Activated CD4-positive, alpha-beta memory T cell treated with anti-CD3 and anti-CD28 coated beads for 36 hours (primary cell): ENCODE measurements at regions of chr19 and their contacts with region 1.

Region 1: GRCh38 chr19:15418588-15419412 is at the start of gene AKAP8L:
- DNase-seq: peak; percentile 99
- H3K4me3 Mint-ChIP-seq: peak within 1 kb of the TSS; percentile 100
- H3K27ac Mint-ChIP-seq: peak within 1 kb of the TSS; percentile 97
- H3K4me1 Mint-ChIP-seq: peaks cover 39% of the 10 kb centered on the region
- H3K27me3 Mint-ChIP-seq: no peaks in the 10 kb centered on the region
- total RNA-seq, gene AKAP8L: 94.2 to 100 TPM

Region 2: DNA sequence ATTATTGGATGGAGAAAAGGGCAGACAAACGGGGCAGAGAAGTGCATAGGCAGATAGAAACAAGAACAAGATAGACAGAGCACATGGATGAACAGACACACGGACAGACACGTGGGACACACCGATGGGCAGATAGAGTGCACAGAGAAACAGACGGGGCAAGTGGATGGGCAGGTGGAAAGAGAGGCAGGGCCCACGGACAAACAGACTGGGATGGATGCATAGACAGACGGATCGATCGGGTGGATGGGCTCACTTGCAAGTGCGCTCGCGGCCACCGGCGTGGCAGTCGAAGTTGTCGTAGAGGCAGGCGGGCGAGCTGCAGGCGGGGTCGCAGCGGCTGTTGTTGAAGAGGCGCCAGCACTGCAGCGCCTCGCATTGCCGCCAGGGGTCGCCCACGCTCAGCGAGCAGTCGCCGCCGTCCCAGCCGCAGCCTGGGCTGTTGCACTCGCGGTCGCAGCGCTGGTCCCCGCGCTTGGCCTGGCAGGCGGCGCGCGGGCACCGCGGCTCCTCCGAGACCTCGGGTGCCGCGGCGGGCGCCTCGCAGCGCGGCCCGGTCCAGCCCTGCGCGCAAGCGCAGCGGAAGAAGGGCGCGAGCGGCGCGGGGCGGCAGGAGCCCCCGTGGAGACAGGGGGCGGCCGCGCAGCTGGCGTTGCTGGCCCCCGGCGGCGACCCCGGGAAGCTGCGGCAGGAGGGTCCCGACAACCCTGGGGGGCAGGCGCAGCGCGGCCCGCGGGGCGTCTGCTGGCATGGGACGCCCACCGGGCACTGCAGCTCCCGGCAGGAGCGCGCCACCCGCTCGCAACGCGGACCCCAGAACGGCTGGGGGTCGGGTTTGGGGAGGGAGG is 241.3 kb before region 1 on chr19:
- CTCF ChIA-PET with region 1: interaction called, 12 read pairs
- POLR2A ChIA-PET with region 1: no interaction called
- intact Hi-C with region 1: loop called (anchors 1 kb)
- DNase-seq: peak; percentile 87
- H3K4me3 Mint-ChIP-seq: no peak overlapping the region
- H3K27ac Mint-ChIP-seq: no peak overlapping the region
- H3K4me1 Mint-ChIP-seq: peaks cover 4% of the 10 kb centered on the region
- H3K27me3 Mint-ChIP-seq: peaks cover 4% of the 10 kb centered on the region

Region 3: DNA sequence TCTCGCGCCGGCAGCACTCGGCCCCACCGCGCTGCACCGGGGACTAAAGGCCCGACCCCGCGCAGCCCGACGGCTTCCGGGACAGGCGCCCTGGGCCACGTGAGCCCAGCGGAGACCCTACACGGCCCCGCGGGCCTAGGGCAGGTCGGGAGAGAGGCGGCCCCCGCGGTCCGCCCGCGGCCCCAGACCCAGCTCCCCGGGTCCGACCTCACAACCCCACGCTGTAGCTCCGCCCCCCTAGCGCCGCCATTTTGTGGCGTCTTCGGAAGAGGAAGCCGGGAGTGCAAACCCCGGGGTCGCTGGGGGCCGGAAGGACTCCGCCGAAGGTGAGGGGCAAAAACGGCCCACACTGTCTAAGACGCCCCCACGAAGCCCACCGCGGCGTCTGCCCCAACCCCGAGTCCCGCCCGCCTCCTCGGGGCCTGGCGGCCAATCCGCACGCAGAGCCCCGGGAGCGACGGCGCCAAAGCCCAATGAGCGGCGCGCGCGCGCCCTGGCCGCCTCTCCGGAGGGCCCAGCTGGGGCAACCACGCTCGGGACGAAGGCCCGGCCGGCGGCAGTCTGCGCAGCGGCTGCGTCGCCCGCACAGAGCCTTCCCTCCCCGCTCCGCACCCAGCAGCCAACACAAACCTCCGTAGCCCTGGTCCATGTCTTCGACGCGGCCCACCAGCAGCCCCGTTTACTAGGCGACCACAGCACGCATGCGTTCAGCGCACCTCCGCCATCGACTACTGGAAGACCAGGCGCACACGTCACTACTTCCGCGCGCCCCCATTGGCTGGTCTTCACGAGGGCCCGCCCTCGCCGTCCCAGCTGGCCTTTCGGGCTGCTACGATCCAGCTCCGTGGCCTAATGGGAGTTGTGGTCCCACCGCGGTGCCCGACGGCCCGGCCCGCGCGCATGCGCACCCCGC is 39.5 kb before region 1 on chr19 and contains the start of gene AKAP8:
- CTCF ChIA-PET with region 1: interaction called, 57 read pairs
- POLR2A ChIA-PET with region 1: interaction called, 51 read pairs
- intact Hi-C with region 1: loop called (anchors 1 kb)
- DNase-seq: peak; percentile 99
- H3K4me3 Mint-ChIP-seq: peak within 1 kb of the TSS; percentile 95
- H3K27ac Mint-ChIP-seq: peak within 1 kb of the TSS; percentile 96
- H3K4me1 Mint-ChIP-seq: peaks cover 42% of the 10 kb centered on the region
- H3K27me3 Mint-ChIP-seq: peaks cover 2% of the 10 kb centered on the region
- total RNA-seq, gene AKAP8: 31.5 to 37.2 TPM

Region 4: GRCh38 chr19:15393963-15394362 is 24.8 kb before region 1 on chr19:
- CTCF ChIA-PET with region 1: no interaction called
- POLR2A ChIA-PET with region 1: no interaction called
- intact Hi-C with region 1: no loop called
- DNase-seq: no peak
- H3K4me3 Mint-ChIP-seq: no peak overlapping the region
- H3K27ac Mint-ChIP-seq: no peak overlapping the region
- H3K4me1 Mint-ChIP-seq: peaks cover 3% of the 10 kb centered on the region
- H3K27me3 Mint-ChIP-seq: no peaks in the 10 kb centered on the region

Region 5: GRCh38 chr19:15432629-15433518 is 14.1 kb after region 1 on chr19:
- CTCF ChIA-PET with region 1: interaction called, 24 read pairs
- POLR2A ChIA-PET with region 1: interaction called, 32 read pairs
- intact Hi-C with region 1: loop called (anchors 1 kb)
- DNase-seq: peak; percentile 95
- H3K4me3 Mint-ChIP-seq: peak overlapping the region; percentile 85
- H3K27ac Mint-ChIP-seq: peak overlapping the region; percentile 85
- H3K4me1 Mint-ChIP-seq: peaks cover 31% of the 10 kb centered on the region
- H3K27me3 Mint-ChIP-seq: no peaks in the 10 kb centered on the region

Region 6: DNA sequence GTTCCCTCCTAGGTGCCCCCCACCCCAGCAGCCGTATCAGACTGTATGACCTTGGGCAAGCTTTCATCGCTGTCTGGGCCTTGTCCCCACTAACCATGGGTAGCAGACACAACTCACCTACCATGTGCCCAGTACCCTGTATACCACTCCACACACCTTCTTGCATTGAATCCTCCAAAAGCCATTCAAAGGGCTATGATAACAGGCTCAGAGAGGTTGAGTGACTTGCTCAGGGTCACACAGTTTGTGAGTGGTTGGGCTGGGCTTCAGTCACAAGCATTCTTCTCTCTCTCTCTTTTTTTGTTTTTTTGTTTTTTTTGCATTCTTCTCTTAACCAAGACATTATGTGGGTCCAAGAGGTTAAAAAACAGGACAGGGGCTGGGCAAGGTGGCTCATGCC is 42.9 kb after region 1 on chr19:
- CTCF ChIA-PET with region 1: interaction called, 19 read pairs
- POLR2A ChIA-PET with region 1: interaction called, 21 read pairs
- intact Hi-C with region 1: no loop called
- DNase-seq: no peak
- H3K4me3 Mint-ChIP-seq: peak overlapping the region; percentile 16
- H3K27ac Mint-ChIP-seq: peak overlapping the region; percentile 96
- H3K4me1 Mint-ChIP-seq: peaks cover 25% of the 10 kb centered on the region
- H3K27me3 Mint-ChIP-seq: no peaks in the 10 kb centered on the region

Region 7: GRCh38 chr19:15555759-15556633 is 137.2 kb after region 1 on chr19:
- CTCF ChIA-PET with region 1: interaction called, 225 read pairs
- POLR2A ChIA-PET with region 1: interaction called, 19 read pairs
- intact Hi-C with region 1: loop called (anchors 1 kb)
- DNase-seq: peak; percentile 99
- H3K4me3 Mint-ChIP-seq: peak overlapping the region; percentile 74
- H3K27ac Mint-ChIP-seq: peak overlapping the region; percentile 74
- H3K4me1 Mint-ChIP-seq: peaks cover 20% of the 10 kb centered on the region
- H3K27me3 Mint-ChIP-seq: peaks cover 6% of the 10 kb centered on the region

Region 8: DNA sequence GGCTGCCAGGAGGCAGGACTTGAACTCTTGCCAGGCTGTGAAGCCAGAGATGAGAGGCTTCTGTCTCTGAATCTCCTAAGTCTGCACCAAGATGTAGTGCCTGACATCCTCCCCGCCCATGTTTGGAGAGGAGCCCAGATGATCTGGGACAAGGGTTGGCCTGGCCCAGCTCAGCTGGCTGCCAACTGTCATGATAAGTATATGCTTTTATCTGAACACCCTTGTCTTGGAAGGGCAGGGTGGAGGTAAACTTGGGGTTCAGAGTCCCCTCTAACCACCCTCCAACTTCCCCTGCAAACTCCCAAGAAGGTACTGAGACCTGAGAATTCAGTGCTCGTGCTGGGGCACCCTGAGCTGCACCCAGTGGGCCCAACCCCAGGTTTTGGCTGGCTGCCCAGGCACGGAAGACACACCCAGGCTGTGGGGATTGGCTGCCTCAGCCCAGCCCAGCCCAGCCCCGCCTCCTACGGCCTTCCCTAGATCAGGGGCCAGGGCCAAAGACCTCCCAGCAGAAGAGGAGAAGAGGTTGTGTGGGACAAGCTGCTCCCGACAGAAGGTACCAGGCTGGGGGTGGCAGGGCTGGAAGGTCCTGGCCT is 253.9 kb after region 1 on chr19 and contains the start of gene CYP4F12:
- CTCF ChIA-PET with region 1: no interaction called
- POLR2A ChIA-PET with region 1: no interaction called
- intact Hi-C with region 1: no loop called
- DNase-seq: peak; percentile 27
- H3K4me3 Mint-ChIP-seq: no peak within 1 kb of the TSS
- H3K27ac Mint-ChIP-seq: peak within 1 kb of the TSS; percentile 58
- H3K4me1 Mint-ChIP-seq: peaks cover 20% of the 10 kb centered on the region
- H3K27me3 Mint-ChIP-seq: peaks cover 2% of the 10 kb centered on the region
- total RNA-seq, gene CYP4F12: 0.41 TPM in 1 of 2 experiments, not detected in the other